Breast epithelium (tissue), 4 donors: ENCODE measurements at regions of chr17 and their contacts with region 1.

Region 1: GRCh38 chr17:75619506-75620431 is 13.5 kb upstream of the SMIM5 start:
- DNase-seq: no peak
- H3K4me3 ChIP-seq: no peak overlapping the region
- H3K27ac ChIP-seq: no peak overlapping the region
- H3K4me1 ChIP-seq: no peaks in the 10 kb centered on the region
- H3K27me3 ChIP-seq: no peaks in the 10 kb centered on the region
- CTCF ChIP-seq: no peak
- POLR2A ChIP-seq: no peak

Region 2: GRCh38 chr17:75571197-75571873 is 48.4 kb before region 1 on chr17:
- intact Hi-C with region 1: no loop called
- DNase-seq: no peak
- H3K4me3 ChIP-seq: no peak overlapping the region
- H3K27ac ChIP-seq: no peak overlapping the region
- H3K4me1 ChIP-seq: no peaks in the 10 kb centered on the region
- H3K27me3 ChIP-seq: no peaks in the 10 kb centered on the region
- CTCF ChIP-seq: no peak
- POLR2A ChIP-seq: no peak

Region 3: DNA sequence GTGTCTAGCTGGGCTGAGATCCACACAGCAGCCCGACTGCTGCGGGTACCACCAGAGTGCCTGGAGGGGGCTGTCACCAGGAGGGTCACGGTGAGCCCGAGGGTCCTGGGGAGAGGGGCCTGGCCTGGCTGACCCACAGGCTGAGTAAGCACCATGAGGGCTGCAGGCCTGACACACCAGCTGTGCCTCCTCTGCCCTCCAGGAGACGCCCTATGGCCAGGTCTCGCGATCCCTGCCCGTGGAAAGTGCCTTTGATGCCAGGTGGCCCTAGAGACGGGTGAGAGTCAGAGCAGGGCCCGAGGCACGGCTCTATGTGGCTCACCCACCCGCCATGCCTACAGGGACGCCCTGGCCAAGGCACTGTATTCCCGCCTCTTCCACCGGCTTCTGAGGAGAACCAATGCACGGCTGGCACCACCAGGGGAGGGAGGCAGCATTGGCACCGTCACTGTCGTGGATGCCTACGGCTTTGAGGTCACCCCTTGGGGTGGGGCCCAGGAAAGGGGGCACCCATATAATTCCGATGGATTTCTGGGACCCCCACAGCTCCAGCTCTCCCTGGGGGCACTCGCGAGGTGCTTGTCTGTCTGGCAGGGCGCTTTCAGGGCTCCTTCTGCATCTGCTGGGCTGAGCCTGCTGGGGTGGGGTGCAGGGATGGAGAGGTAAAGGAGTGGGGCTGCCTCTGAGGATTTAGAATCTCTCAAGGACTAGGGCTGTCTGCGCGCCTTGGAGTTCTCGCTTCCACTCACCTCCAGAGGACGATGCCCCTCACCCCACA is 25.1 kb before region 1 on chr17:
- intact Hi-C with region 1: loop called (anchors 1 kb)
- DNase-seq: no peak
- H3K4me3 ChIP-seq: no peak overlapping the region
- H3K27ac ChIP-seq: no peak overlapping the region
- H3K4me1 ChIP-seq: no peaks in the 10 kb centered on the region
- H3K27me3 ChIP-seq: no peaks in the 10 kb centered on the region
- CTCF ChIP-seq: no peak
- POLR2A ChIP-seq: no peak